Caco-2 (cell line): ENCODE measurements at regions of chr4 and their contacts with region 1.

Region 1: GRCh38 chr4:41281038-41281634 is 24.4 kb downstream of the UCHL1 start:
- DNase-seq: peak; percentile 54 to 70
- H3K4me3 ChIP-seq: no peak overlapping the region
- H3K4me3 Mint-ChIP-seq: no peak overlapping the region
- H3K27ac Mint-ChIP-seq: no peak overlapping the region
- H3K4me1 ChIP-seq: no peaks in the 10 kb centered on the region
- H3K4me1 Mint-ChIP-seq: no peaks in the 10 kb centered on the region
- H3K27me3 ChIP-seq: no peaks in the 10 kb centered on the region
- H3K27me3 Mint-ChIP-seq: no peaks in the 10 kb centered on the region
- CTCF ChIP-seq: peak; percentile 62 to 73

Region 2: GRCh38 chr4:40502934-40503333 is 778.2 kb before region 1 on chr4:
- CTCF ChIA-PET with region 1: no interaction called
- POLR2A ChIA-PET with region 1: no interaction called
- intact Hi-C with region 1: no loop called
- DNase-seq: no peak
- H3K4me3 ChIP-seq: no peak overlapping the region
- H3K4me3 Mint-ChIP-seq: no peak overlapping the region
- H3K27ac Mint-ChIP-seq: no peak overlapping the region
- H3K4me1 ChIP-seq: peaks cover 16% of the 10 kb centered on the region
- H3K4me1 Mint-ChIP-seq: peaks cover 11% of the 10 kb centered on the region
- H3K27me3 ChIP-seq: no peaks in the 10 kb centered on the region
- H3K27me3 Mint-ChIP-seq: no peaks in the 10 kb centered on the region
- CTCF ChIP-seq: no peak

Region 3: GRCh38 chr4:40812386-40812785 is 468.8 kb before region 1 on chr4:
- CTCF ChIA-PET with region 1: no interaction called
- POLR2A ChIA-PET with region 1: no interaction called
- intact Hi-C with region 1: no loop called
- DNase-seq: no peak
- H3K4me3 ChIP-seq: no peak overlapping the region
- H3K4me3 Mint-ChIP-seq: no peak overlapping the region
- H3K27ac Mint-ChIP-seq: no peak overlapping the region
- H3K4me1 ChIP-seq: no peaks in the 10 kb centered on the region
- H3K4me1 Mint-ChIP-seq: no peaks in the 10 kb centered on the region
- H3K27me3 ChIP-seq: no peaks in the 10 kb centered on the region
- H3K27me3 Mint-ChIP-seq: no peaks in the 10 kb centered on the region
- CTCF ChIP-seq: no peak

Region 4: GRCh38 chr4:41057467-41057866 is 223.7 kb before region 1 on chr4:
- CTCF ChIA-PET with region 1: no interaction called
- POLR2A ChIA-PET with region 1: no interaction called
- intact Hi-C with region 1: no loop called
- DNase-seq: no peak
- H3K4me3 ChIP-seq: no peak overlapping the region
- H3K4me3 Mint-ChIP-seq: no peak overlapping the region
- H3K27ac Mint-ChIP-seq: no peak overlapping the region
- H3K4me1 ChIP-seq: peaks cover 8% of the 10 kb centered on the region; the same call in 1 of the 2 replicates
- H3K4me1 Mint-ChIP-seq: peaks cover 14% of the 10 kb centered on the region
- H3K27me3 ChIP-seq: no peaks in the 10 kb centered on the region
- H3K27me3 Mint-ChIP-seq: no peaks in the 10 kb centered on the region
- CTCF ChIP-seq: no peak

Region 5: GRCh38 chr4:41477200-41477910 is 196.2 kb after region 1 on chr4:
- CTCF ChIA-PET with region 1: no interaction called
- POLR2A ChIA-PET with region 1: no interaction called
- intact Hi-C with region 1: loop called (anchors 1 kb)
- DNase-seq: no peak
- H3K4me3 ChIP-seq: no peak overlapping the region
- H3K4me3 Mint-ChIP-seq: no peak overlapping the region
- H3K27ac Mint-ChIP-seq: no peak overlapping the region
- H3K4me1 ChIP-seq: peaks cover 5% of the 10 kb centered on the region
- H3K4me1 Mint-ChIP-seq: peaks cover 5% of the 10 kb centered on the region
- H3K27me3 ChIP-seq: no peaks in the 10 kb centered on the region
- H3K27me3 Mint-ChIP-seq: no peaks in the 10 kb centered on the region
- CTCF ChIP-seq: no peak

Region 6: GRCh38 chr4:41644288-41644914 is 363.3 kb after region 1 on chr4:
- CTCF ChIA-PET with region 1: interaction called, 4 read pairs
- POLR2A ChIA-PET with region 1: no interaction called
- intact Hi-C with region 1: loop called (anchors 1 kb)
- DNase-seq: peak; percentile 52 to 68
- H3K4me3 ChIP-seq: no peak overlapping the region
- H3K4me3 Mint-ChIP-seq: peak overlapping the region; percentile 21
- H3K27ac Mint-ChIP-seq: no peak overlapping the region
- H3K4me1 ChIP-seq: peaks cover 9% of the 10 kb centered on the region; the same call in 1 of the 2 replicates
- H3K4me1 Mint-ChIP-seq: no peaks in the 10 kb centered on the region
- H3K27me3 ChIP-seq: no peaks in the 10 kb centered on the region
- H3K27me3 Mint-ChIP-seq: no peaks in the 10 kb centered on the region
- CTCF ChIP-seq: peak; percentile 65 to 67

Region 7: GRCh38 chr4:41661442-41662076 is 380.4 kb after region 1 on chr4:
- CTCF ChIA-PET with region 1: interaction called, 31 read pairs
- POLR2A ChIA-PET with region 1: no interaction called
- intact Hi-C with region 1: loop called (anchors 1 kb)
- DNase-seq: peak; percentile 46 to 65
- H3K4me3 ChIP-seq: no peak overlapping the region
- H3K4me3 Mint-ChIP-seq: no peak overlapping the region
- H3K27ac Mint-ChIP-seq: no peak overlapping the region
- H3K4me1 ChIP-seq: no peaks in the 10 kb centered on the region
- H3K4me1 Mint-ChIP-seq: no peaks in the 10 kb centered on the region
- H3K27me3 ChIP-seq: no peaks in the 10 kb centered on the region
- H3K27me3 Mint-ChIP-seq: no peaks in the 10 kb centered on the region
- CTCF ChIP-seq: peak; percentile 86 to 88

Region 8: DNA sequence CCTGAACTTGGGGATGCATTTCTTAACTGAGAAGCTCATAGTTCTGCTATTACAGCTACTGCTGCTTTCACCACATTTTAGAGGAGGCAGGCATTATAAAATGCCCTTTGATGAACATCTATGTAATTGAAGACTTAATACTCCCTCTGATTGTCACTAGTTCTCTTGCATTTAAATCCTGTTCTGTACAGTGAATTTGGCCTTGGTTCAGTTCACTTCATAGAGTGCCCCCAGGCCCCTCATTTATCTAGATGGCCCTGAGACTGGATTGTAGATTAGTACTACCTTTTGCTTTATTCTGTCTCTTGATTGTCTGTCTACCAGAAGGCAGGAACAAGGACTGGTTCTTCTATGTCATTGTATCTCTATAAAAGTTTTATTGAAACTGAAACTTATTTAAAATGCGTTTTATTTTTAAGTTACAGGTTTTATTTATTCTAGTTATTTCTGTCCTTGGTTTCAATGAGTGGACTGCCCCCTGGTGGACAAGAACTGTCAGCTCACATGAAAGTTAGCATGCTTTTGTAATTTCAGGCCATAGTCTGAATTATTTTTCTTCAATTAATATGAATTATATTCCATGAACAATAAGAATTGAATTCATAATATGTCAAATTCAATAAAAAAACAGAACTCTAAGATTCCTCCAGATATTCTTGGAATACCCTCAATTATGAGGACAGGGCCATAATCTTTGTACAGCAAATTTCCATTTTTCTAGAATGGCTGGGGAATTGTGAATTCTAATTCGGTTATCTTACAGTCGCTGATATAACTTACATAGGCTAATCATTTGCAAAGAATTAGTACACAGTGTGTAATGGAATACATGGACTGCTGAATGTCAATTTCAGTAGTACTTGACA is 606.9 kb after region 1 on chr4:
- CTCF ChIA-PET with region 1: no interaction called
- POLR2A ChIA-PET with region 1: no interaction called
- intact Hi-C with region 1: loop called (anchors 2 kb)
- DNase-seq: peak in 1 of 2 experiments; percentile 44
- H3K4me3 ChIP-seq: no peak overlapping the region
- H3K4me3 Mint-ChIP-seq: no peak overlapping the region
- H3K27ac Mint-ChIP-seq: no peak overlapping the region
- H3K4me1 ChIP-seq: no peaks in the 10 kb centered on the region
- H3K4me1 Mint-ChIP-seq: no peaks in the 10 kb centered on the region
- H3K27me3 ChIP-seq: no peaks in the 10 kb centered on the region; the same call in 1 of the 2 replicates
- H3K27me3 Mint-ChIP-seq: no peaks in the 10 kb centered on the region
- CTCF ChIP-seq: peak; percentile 68 to 78